WTC11 (cell line): ENCODE measurements at regions of chr9 and their contacts with region 1.

Region 1: GRCh38 chr9:110058304-110058953 is 149.5 kb downstream of the C9orf152 start:
- DNase-seq: peak; percentile 68
- ATAC-seq: peak; percentile 96
- H3K4me3 Mint-ChIP-seq: no peak overlapping the region
- H3K27ac Mint-ChIP-seq: peak overlapping the region; percentile 81
- H3K4me1 Mint-ChIP-seq: peaks cover 40% of the 10 kb centered on the region
- H3K27me3 Mint-ChIP-seq: no peaks in the 10 kb centered on the region
- CTCF ChIP-seq: peak; percentile 35; the same call in 1 of the 2 replicates

Region 2: GRCh38 chr9:109683521-109683920 is 374.9 kb before region 1 on chr9:
- CTCF ChIA-PET with region 1: no interaction called
- POLR2A ChIA-PET with region 1: no interaction called
- DNase-seq: no peak
- ATAC-seq: no peak
- H3K4me3 Mint-ChIP-seq: no peak overlapping the region
- H3K27ac Mint-ChIP-seq: no peak overlapping the region
- H3K4me1 Mint-ChIP-seq: peaks cover 16% of the 10 kb centered on the region
- H3K27me3 Mint-ChIP-seq: peaks cover 3% of the 10 kb centered on the region; the same call in 1 of the 2 replicates
- CTCF ChIP-seq: no peak

Region 3: DNA sequence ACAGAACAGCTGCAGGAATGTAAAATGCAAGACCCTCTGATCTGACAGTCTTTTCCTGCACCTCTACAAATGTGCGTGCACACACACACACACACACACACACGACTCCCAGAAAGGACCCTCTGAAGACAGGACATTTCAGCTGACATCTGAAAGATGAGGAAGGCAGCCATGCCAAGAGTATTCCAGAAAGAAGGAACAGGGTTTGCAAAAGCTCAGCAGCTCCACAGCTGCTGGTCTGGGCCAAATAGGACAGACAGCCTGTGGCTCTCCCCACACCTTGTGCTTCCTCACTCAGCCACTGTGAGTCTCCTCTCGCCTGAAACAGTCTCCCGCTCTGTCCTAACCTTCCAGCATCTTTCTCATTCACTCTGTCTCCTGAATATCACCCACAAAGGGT is 89.4 kb before region 1 on chr9:
- CTCF ChIA-PET with region 1: interaction called, 11 read pairs
- POLR2A ChIA-PET with region 1: no interaction called
- DNase-seq: peak; percentile 38
- ATAC-seq: peak; percentile 95
- H3K4me3 Mint-ChIP-seq: no peak overlapping the region
- H3K27ac Mint-ChIP-seq: no peak overlapping the region; the same call in none of the 2 replicates
- H3K4me1 Mint-ChIP-seq: peaks cover 7% of the 10 kb centered on the region
- H3K27me3 Mint-ChIP-seq: no peaks in the 10 kb centered on the region
- CTCF ChIP-seq: no peak